ENCODE measurements at regions of chr5 and their contacts with region 1.

Region 1: GRCh38 chr5:158421319-158421718 is 562.4 kb upstream of the CLINT1 start:
- DNase-seq: no peak
- CTCF ChIP-seq: no peak

Region 2: DNA sequence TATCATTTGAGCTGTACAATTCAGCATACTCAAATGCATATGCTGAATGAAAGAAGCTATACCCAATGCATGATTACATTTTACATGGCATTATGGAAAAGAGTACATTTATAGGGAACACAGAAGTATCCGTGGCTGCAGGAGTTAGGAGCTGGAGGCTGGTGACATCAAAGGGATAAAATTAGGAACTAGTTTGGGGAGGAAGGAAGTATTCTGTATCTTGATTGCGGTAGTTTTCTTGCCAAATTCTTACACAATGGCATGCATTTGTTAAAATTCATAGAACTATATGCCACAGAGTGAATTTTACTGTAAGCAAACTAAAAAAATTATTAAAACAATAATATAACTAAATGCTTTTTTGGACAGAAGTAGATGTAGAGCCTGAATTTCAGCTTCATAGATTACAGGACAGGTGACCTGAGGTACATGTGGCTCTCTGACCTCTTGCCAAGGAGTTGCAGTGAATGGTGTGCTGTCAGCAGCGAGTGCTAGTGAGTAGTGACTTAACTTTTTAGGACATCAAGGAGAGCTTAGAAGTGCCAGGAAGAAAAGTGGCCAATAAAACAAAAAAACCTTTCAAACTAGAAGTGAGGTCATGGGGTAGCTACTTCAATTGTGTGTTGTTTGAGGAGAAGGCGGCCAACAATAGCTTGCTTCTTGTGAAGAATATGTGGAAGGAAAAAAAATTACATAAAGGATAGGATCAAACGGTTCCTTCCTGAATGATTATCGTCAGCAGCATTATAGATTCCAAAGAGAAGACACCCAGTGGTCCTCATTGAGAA is 47.5 kb before region 1 on chr5:
- CTCF ChIA-PET with region 1: no interaction called
- POLR2A ChIA-PET with region 1: no interaction called
- DNase-seq: no peak
- CTCF ChIP-seq: no peak

Region 3: DNA sequence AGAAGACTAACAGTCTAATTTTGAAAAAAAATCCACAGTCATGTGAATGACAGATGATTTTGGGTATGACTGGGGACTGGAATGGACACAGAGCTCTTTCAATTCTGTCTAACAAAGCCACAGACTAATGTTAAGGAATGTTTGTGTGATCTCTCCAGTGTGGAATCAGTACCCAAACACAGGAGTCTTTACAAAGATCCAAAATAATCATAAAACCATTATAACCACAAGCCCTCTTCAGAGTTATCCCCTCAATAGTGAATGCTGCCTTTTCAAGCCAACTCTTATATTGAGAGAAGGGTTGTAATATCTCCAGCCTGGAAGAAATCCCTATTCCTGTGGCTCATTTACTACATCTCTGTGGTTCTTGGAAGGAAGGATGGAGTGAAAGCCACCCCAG is 10.3 kb before region 1 on chr5:
- CTCF ChIA-PET with region 1: interaction called, 10 read pairs
- POLR2A ChIA-PET with region 1: no interaction called
- DNase-seq: no peak
- CTCF ChIP-seq: no peak